ENCODE measurements at regions of chr6 and their contacts with region 1.

Region 1: GRCh38 chr6:99119109-99120031 is 171.6 kb upstream of the FBXL4 start:
- DNase-seq: peak; percentile 54
- H3K4me3 ChIP-seq: no peak overlapping the region
- H3K27ac ChIP-seq: no peak overlapping the region
- H3K4me1 ChIP-seq: no peaks in the 10 kb centered on the region
- H3K27me3 ChIP-seq: peaks cover 0 to 2% of the 10 kb centered on the region in 2 experiments
- CTCF ChIP-seq: peak; percentile 44 to 49
- POLR2A ChIP-seq: no peak

Region 2: DNA sequence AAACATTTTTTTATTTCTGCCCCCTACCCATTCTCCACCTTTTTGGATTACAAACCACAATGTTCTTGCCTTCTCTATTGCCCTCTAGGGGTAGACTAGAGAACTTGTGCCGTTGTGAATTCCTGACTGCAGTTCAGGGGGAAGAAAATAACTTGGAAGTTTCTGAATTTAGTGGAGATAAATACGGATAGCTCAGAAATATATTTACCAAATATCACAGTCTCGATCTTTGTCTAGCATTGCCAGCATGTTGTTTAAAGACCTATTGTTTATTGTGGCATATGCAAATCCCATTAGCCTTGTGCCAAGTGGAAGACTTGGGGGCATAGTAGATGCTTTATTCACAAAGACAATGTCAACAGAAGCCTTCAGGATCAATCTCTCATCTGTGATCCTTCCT is 1682.3 kb before region 1 on chr6:
- CTCF ChIA-PET with region 1: interaction called, 56 read pairs
- POLR2A ChIA-PET with region 1: no interaction called
- dilution Hi-C with region 1: no loop called
- intact Hi-C with region 1: no loop called
- DNase-seq: peak; percentile 34
- H3K4me3 ChIP-seq: no peak overlapping the region
- H3K27ac ChIP-seq: no peak overlapping the region
- H3K4me1 ChIP-seq: no peaks in the 10 kb centered on the region
- H3K27me3 ChIP-seq: peaks cover 4 to 16% of the 10 kb centered on the region in 2 experiments
- CTCF ChIP-seq: peak; percentile 64 to 69
- POLR2A ChIP-seq: no peak

Region 3: DNA sequence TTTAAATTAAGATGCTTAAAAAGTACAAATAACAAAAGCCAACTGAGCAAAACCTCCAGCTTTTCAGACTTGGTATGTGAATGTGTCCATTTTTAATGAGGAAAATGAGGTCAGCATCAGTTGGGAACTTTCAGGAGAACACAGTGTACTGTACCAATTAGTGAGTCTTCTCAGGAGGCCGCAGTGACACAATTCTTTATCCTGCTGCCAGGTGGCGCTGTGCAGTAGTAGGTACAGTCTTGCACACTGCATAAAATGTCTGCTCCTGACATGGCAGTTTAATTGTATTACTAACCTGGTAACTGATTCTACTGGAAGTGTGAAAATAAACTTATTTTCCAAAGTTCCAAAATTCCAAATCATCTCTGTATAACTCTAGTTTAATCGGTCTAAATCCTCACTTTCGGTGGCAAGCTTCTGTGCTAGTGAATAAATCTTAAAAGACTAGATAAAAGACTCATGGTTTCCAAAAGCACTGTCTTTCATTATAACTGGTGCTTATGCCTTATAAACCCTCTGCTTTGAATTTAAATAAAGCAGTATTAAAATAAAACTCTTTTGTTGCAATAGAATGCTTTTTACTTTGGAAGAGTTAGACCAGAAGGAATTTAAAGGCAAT is 1621.5 kb before region 1 on chr6:
- CTCF ChIA-PET with region 1: interaction called, 120 read pairs
- POLR2A ChIA-PET with region 1: no interaction called
- dilution Hi-C with region 1: no loop called
- intact Hi-C with region 1: loop called (anchors 1 kb)
- DNase-seq: peak; percentile 63
- H3K4me3 ChIP-seq: no peak overlapping the region
- H3K27ac ChIP-seq: no peak overlapping the region
- H3K4me1 ChIP-seq: no peaks in the 10 kb centered on the region
- H3K27me3 ChIP-seq: no peaks in the 10 kb centered on the region
- CTCF ChIP-seq: peak; percentile 72 to 86
- POLR2A ChIP-seq: no peak

Region 4: GRCh38 chr6:97705568-97705967 is 1413.8 kb before region 1 on chr6:
- CTCF ChIA-PET with region 1: interaction called, 3 read pairs
- POLR2A ChIA-PET with region 1: no interaction called
- dilution Hi-C with region 1: no loop called
- intact Hi-C with region 1: loop called (anchors 5 kb)
- DNase-seq: no peak
- H3K4me3 ChIP-seq: no peak overlapping the region
- H3K27ac ChIP-seq: no peak overlapping the region
- H3K4me1 ChIP-seq: no peaks in the 10 kb centered on the region
- H3K27me3 ChIP-seq: no peaks in the 10 kb centered on the region
- CTCF ChIP-seq: no peak
- POLR2A ChIP-seq: no peak